ENCODE measurements at regions of chr1 and their contacts with region 1.

Region 1: GRCh38 chr1:206912445-206913095 is 9.2 kb downstream of the FCMR start:
- DNase-seq: peak; percentile 49
- H3K4me3 Mint-ChIP-seq: no peak overlapping the region
- H3K27ac Mint-ChIP-seq: no peak overlapping the region
- H3K4me1 Mint-ChIP-seq: peaks cover 68% of the 10 kb centered on the region
- H3K27me3 Mint-ChIP-seq: peaks cover 3% of the 10 kb centered on the region

Region 2: GRCh38 chr1:206419250-206419649 is 493.3 kb before region 1 on chr1:
- intact Hi-C with region 1: no loop called
- DNase-seq: no peak
- H3K4me3 Mint-ChIP-seq: no peak overlapping the region
- H3K27ac Mint-ChIP-seq: peak overlapping the region; percentile 5
- H3K4me1 Mint-ChIP-seq: peaks cover 36% of the 10 kb centered on the region
- H3K27me3 Mint-ChIP-seq: no peaks in the 10 kb centered on the region

Region 3: GRCh38 chr1:206635080-206635977 is 277.2 kb before region 1 on chr1 and contains the start of gene DYRK3:
- intact Hi-C with region 1: loop called (anchors 1 kb)
- DNase-seq: peak; percentile 95
- H3K4me3 Mint-ChIP-seq: peak within 1 kb of the TSS; percentile 89
- H3K27ac Mint-ChIP-seq: peak within 1 kb of the TSS; percentile 95
- H3K4me1 Mint-ChIP-seq: peaks cover 38% of the 10 kb centered on the region
- H3K27me3 Mint-ChIP-seq: peaks cover 7% of the 10 kb centered on the region
- total RNA-seq, gene DYRK3: 22.1 and 23.3 TPM in 2 replicates

Region 4: GRCh38 chr1:206734499-206735142 is 177.9 kb before region 1 on chr1:
- intact Hi-C with region 1: loop called (anchors 1 kb)
- DNase-seq: peak; percentile 56
- H3K4me3 Mint-ChIP-seq: no peak overlapping the region
- H3K27ac Mint-ChIP-seq: no peak overlapping the region
- H3K4me1 Mint-ChIP-seq: peaks cover 61% of the 10 kb centered on the region
- H3K27me3 Mint-ChIP-seq: no peaks in the 10 kb centered on the region

Region 5: DNA sequence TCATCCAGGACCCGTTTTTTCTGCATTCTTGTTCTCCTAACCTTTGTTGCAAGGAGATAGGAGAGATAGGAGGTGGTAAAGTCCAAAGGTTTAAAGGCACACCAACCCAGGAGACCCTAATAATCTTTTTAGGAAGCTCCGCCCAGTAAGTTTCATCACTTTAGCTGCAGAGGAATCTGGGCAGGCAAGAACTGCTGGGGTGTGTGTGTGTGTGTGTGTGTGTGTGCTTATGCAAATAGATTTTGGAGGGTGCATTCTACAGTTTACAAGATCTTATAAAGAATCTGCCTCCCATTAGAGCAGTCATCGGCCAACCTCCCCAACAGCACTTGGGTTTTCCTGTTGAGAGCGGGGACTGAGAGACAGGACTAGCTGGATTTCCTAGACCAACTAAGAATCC is 136.3 kb before region 1 on chr1:
- intact Hi-C with region 1: no loop called
- DNase-seq: no peak
- H3K4me3 Mint-ChIP-seq: no peak overlapping the region
- H3K27ac Mint-ChIP-seq: no peak overlapping the region
- H3K4me1 Mint-ChIP-seq: peaks cover 21% of the 10 kb centered on the region
- H3K27me3 Mint-ChIP-seq: peaks cover 42% of the 10 kb centered on the region

Region 6: GRCh38 chr1:206808615-206809014 is 104.0 kb before region 1 on chr1:
- intact Hi-C with region 1: loop called (anchors 1 kb)
- DNase-seq: peak; percentile 43
- H3K4me3 Mint-ChIP-seq: no peak overlapping the region
- H3K27ac Mint-ChIP-seq: peak overlapping the region; percentile 15
- H3K4me1 Mint-ChIP-seq: peaks cover 57% of the 10 kb centered on the region
- H3K27me3 Mint-ChIP-seq: peaks cover 13% of the 10 kb centered on the region

Region 7: DNA sequence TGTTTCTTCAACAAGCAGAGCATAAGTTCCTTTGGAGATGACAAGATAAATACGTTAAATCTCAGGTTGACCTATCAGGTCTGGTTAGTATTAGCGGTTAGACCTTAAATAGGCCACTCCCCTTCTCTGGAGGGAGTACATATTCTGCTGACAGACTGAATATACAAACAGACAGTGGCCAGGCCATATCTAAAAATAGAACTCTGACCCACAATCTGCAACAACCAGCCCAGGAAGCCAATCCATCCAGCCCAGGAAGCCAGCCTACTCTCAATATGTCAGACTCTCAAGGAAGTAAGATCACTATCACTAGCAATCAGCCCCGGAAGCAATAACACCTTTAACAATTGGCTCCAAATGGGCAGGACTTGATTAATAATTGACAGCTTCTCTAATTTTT is 40.4 kb before region 1 on chr1:
- intact Hi-C with region 1: no loop called
- DNase-seq: no peak
- H3K4me3 Mint-ChIP-seq: no peak overlapping the region
- H3K27ac Mint-ChIP-seq: no peak overlapping the region
- H3K4me1 Mint-ChIP-seq: peaks cover 7% of the 10 kb centered on the region
- H3K27me3 Mint-ChIP-seq: peaks cover 17% of the 10 kb centered on the region

Region 8: GRCh38 chr1:206890690-206891089 is 21.9 kb before region 1 on chr1:
- intact Hi-C with region 1: loop called (anchors 1 kb)
- DNase-seq: no peak
- H3K4me3 Mint-ChIP-seq: peak overlapping the region; percentile 32
- H3K27ac Mint-ChIP-seq: peak overlapping the region; percentile 25
- H3K4me1 Mint-ChIP-seq: peaks cover 51% of the 10 kb centered on the region
- H3K27me3 Mint-ChIP-seq: peaks cover 9% of the 10 kb centered on the region

Region 9: DNA sequence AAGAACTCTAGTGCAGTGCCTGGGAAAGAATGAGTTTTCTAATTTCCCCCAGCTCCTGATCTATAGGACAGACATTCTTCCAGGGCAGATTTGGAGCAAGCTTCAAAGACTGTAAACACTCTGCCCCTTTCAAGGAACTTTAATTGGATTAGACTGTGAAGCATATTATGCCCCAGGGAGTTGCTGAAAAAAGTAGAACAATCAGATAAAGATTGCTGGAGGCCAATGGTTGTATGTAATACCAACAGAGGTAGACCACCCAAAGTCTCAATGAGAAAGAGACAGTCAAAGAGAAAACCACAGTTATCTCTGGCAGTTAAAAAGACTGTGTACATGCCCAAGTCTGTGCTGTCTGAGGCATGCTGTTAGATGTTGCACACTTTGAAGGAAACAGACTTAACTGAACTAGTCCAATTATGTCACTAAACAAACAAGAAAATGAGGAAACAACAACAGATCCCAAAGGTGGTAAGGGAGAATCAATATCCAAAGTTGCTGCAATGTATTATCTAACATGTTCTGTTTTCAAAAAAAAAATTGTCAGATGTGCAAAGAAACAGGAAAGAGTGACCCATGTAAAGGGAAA is 215.9 kb after region 1 on chr1:
- intact Hi-C with region 1: no loop called
- DNase-seq: no peak
- H3K4me3 Mint-ChIP-seq: no peak overlapping the region
- H3K27ac Mint-ChIP-seq: no peak overlapping the region
- H3K4me1 Mint-ChIP-seq: no peaks in the 10 kb centered on the region
- H3K27me3 Mint-ChIP-seq: peaks cover 9% of the 10 kb centered on the region

Measured in activated T-helper 1 cell treated with anti-CD3 and anti-CD28 coated beads, Interleukin-12 subunit alpha, Interleukin-12 subunit beta, Interleukin-2, Interleukin-4 antibody, amounts not matched to agents 30 ng/mL and 10 ng/mL and 1 ng/mL, durations not matched to agents 14 hours and 24 hours and 36 hours (primary cell).